ENCODE measurements at regions of chr9 and their contacts with region 1.

Region 1: GRCh38 chr9:112162621-112163413 is 12.3 kb downstream of the SUSD1 start:
- DNase-seq: no peak
- ATAC-seq: peak; percentile 80
- H3K4me3 Mint-ChIP-seq: no peak overlapping the region
- H3K27ac Mint-ChIP-seq: peak overlapping the region; percentile 21
- H3K4me1 Mint-ChIP-seq: peaks cover 16% of the 10 kb centered on the region
- H3K27me3 Mint-ChIP-seq: no peaks in the 10 kb centered on the region
- CTCF ChIP-seq: no peak

Region 2: GRCh38 chr9:112078432-112078831 is 84.4 kb before region 1 on chr9:
- CTCF ChIA-PET with region 1: no interaction called
- POLR2A ChIA-PET with region 1: no interaction called
- intact Hi-C with region 1: no loop called
- DNase-seq: no peak
- ATAC-seq: peak; percentile 55
- H3K4me3 Mint-ChIP-seq: peak overlapping the region; percentile 75
- H3K27ac Mint-ChIP-seq: peak overlapping the region; percentile 82
- H3K4me1 Mint-ChIP-seq: peaks cover 54% of the 10 kb centered on the region
- H3K27me3 Mint-ChIP-seq: no peaks in the 10 kb centered on the region
- CTCF ChIP-seq: no peak

Region 3: GRCh38 chr9:112140936-112141335 is 21.9 kb before region 1 on chr9:
- CTCF ChIA-PET with region 1: no interaction called
- POLR2A ChIA-PET with region 1: interaction called, 3 read pairs
- intact Hi-C with region 1: loop called (anchors 1 kb)
- DNase-seq: no peak
- ATAC-seq: no peak
- H3K4me3 Mint-ChIP-seq: no peak overlapping the region
- H3K27ac Mint-ChIP-seq: peak overlapping the region; percentile 35
- H3K4me1 Mint-ChIP-seq: peaks cover 12% of the 10 kb centered on the region
- H3K27me3 Mint-ChIP-seq: no peaks in the 10 kb centered on the region
- CTCF ChIP-seq: no peak

Region 4: GRCh38 chr9:112218908-112219307 is 56.1 kb after region 1 on chr9:
- CTCF ChIA-PET with region 1: no interaction called
- POLR2A ChIA-PET with region 1: no interaction called
- intact Hi-C with region 1: no loop called
- DNase-seq: no peak
- ATAC-seq: peak; percentile 66
- H3K4me3 Mint-ChIP-seq: peak overlapping the region; percentile 1
- H3K27ac Mint-ChIP-seq: peak overlapping the region; percentile 26
- H3K4me1 Mint-ChIP-seq: peaks cover 20% of the 10 kb centered on the region
- H3K27me3 Mint-ChIP-seq: no peaks in the 10 kb centered on the region
- CTCF ChIP-seq: no peak

Measured in activated B cell treated with CpG ODN at 0.5 μM for 24 hours (primary cell).